Dendritic cell treated with granulocyte-macrophage colony-stimulating factor and Interleukin-4, amounts not matched to agents 40 ng/mL and 50 ng/mL, for 4 days (primary cell): ENCODE measurements at regions of chr1 and their contacts with region 1.

Region 1: GRCh38 chr1:202852163-202852904 is 36.6 kb downstream of the RABIF start:
- H3K4me3 Mint-ChIP-seq: no peak overlapping the region
- H3K27ac Mint-ChIP-seq: no peak overlapping the region
- H3K4me1 Mint-ChIP-seq: peaks cover 19% of the 10 kb centered on the region
- H3K27me3 Mint-ChIP-seq: no peaks in the 10 kb centered on the region

Region 2: DNA sequence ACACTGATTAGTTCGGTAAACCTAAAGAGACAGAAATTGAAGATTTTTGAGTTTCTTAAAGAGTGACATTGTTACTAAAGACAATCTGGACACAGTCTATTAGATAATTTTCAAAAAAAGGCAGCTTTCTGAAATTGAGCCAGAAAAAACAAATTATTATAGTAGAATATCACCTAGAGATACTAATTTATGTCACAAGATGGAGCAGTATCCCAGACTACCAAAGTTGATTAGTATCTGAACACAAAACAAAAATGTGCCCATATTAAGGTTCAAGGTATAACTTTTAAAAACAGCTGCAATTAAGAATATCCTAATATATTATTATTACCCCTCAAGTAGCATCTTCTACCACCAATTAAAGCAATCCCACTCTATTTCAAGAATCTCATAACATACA is 101.6 kb before region 1 on chr1:
- intact Hi-C with region 1: loop called (anchors 5 kb)
- H3K4me3 Mint-ChIP-seq: no peak overlapping the region
- H3K27ac Mint-ChIP-seq: no peak overlapping the region
- H3K4me1 Mint-ChIP-seq: peaks cover 11% of the 10 kb centered on the region
- H3K27me3 Mint-ChIP-seq: no peaks in the 10 kb centered on the region

Region 3: DNA sequence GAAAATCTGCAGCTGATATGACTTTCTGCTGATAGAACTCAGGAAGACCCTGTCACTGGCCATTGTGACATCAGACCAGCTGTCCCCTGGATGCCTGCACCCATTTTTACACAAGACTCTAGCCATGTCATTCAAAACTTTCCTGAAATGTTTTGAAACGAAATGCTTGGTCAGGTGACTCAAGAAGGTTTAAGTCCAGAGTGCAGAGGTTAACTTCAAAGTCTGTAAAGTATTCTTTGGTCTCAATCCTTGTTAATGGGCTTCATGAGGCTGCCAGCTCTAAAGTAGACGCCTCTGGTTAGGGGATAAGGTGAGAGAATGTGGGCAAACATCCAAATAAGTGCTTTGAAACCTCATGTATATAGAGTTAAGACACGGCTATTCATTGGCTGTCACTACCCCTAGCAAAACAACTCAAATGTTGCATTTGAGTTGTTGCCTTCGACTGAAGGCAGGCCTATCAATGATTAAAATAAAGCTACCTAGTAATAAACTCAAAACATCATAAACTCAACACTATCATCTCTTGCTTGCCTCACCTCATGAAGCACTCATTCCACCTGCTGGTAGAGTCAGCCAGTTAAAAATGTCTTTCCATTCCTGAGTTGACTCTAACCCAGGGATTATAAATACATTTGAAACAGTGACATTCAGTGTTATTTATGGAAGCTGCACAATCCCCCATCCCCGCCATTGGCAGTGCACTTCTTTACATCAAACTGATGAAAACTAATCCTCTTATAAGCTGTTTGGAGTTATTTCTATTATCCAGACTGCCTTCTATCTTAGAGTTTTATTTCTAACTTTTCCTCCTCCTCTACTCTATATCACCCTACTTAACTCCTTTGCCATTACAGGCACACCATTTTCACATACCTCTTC is 10.6 kb after region 1 on chr1:
- intact Hi-C with region 1: no loop called
- H3K4me3 Mint-ChIP-seq: no peak overlapping the region
- H3K27ac Mint-ChIP-seq: no peak overlapping the region
- H3K4me1 Mint-ChIP-seq: peaks cover 29% of the 10 kb centered on the region
- H3K27me3 Mint-ChIP-seq: peaks cover 39% of the 10 kb centered on the region

Region 4: GRCh38 chr1:202957733-202958543 is 105.6 kb after region 1 on chr1 and contains the start of gene ADIPOR1:
- intact Hi-C with region 1: no loop called
- H3K4me3 Mint-ChIP-seq: peak within 1 kb of the TSS; percentile 86
- H3K27ac Mint-ChIP-seq: peak within 1 kb of the TSS; percentile 86
- H3K4me1 Mint-ChIP-seq: peaks cover 50% of the 10 kb centered on the region
- H3K27me3 Mint-ChIP-seq: no peaks in the 10 kb centered on the region